ENCODE measurements at regions of chr1 and their contacts with region 1.

Region 1: GRCh38 chr1:202589190-202590030 is 120.8 kb downstream of the SYT2 start:
- DNase-seq: peak in 1 of 2 experiments; percentile 77
- H3K4me3 ChIP-seq: no peak overlapping the region
- H3K27ac ChIP-seq: no peak overlapping the region
- H3K4me1 ChIP-seq: no peaks in the 10 kb centered on the region
- H3K27me3 ChIP-seq: no peaks in the 10 kb centered on the region; a peak in 1 of 7 replicates
- CTCF ChIP-seq: no peak
- EP300 ChIP-seq: no peak
- POLR2A ChIP-seq: no peak
- RAD21 ChIP-seq: no peak

Region 2: GRCh38 chr1:202576816-202577215 is 12.6 kb before region 1 on chr1:
- CTCF ChIA-PET with region 1: interaction called, 18 read pairs
- POLR2A ChIA-PET with region 1: interaction called, 3 read pairs
- DNase-seq: no peak
- H3K4me3 ChIP-seq: no peak overlapping the region
- H3K27ac ChIP-seq: no peak overlapping the region
- H3K4me1 ChIP-seq: peaks cover 0 to 27% (median 19%) of the 10 kb centered on the region in 4 experiments; a peak in 6 of 7 replicates
- H3K27me3 ChIP-seq: no peaks in the 10 kb centered on the region
- CTCF ChIP-seq: no peak
- EP300 ChIP-seq: no peak
- POLR2A ChIP-seq: no peak
- RAD21 ChIP-seq: no peak

Region 3: DNA sequence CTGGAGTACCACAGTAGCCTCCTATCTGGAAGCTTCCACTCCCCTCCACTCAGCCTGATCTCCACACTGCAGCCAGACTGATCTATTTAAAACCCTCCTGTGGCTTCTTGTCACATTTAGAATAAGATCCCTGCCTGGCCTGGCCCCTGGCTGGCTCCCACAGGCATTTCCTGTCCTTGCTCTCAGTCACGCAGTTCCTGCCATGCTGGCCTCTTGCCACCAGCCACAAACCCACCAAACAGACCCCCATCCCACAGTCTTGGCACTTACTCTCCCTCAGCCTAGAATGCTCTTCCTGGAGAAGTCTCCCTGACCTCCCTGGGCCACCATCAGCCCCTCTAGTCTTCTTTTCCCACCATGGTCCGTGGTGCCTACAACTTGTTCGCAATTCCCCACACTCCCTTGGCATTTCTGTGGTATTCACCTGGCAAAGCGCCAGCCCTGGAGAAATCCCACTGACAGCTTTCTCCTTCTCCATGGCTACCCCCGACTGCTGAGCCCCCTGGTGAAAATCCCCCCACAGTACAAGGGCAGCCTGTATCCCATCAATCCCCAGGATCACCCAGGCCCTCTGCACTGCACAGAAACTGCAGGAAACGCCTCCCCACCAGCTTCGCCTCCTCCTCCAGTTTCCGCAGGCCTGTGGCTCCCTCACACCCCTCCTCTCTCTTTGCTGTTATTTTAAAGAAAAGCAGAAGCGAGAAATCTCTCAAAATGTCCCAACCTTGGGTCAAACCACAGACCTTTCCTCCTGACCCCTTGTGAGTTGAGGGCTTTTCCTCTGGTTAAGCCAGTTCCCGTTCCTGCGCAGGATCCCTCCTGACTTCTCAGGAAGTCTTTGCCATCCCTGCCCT is 26.3 kb after region 1 on chr1:
- CTCF ChIA-PET with region 1: no interaction called
- POLR2A ChIA-PET with region 1: no interaction called
- DNase-seq: no peak
- H3K4me3 ChIP-seq: no peak overlapping the region
- H3K27ac ChIP-seq: no peak overlapping the region
- H3K4me1 ChIP-seq: peaks cover 3 to 9% (median 7%) of the 10 kb centered on the region in 4 experiments; a peak in 5 of 7 replicates
- H3K27me3 ChIP-seq: no peaks in the 10 kb centered on the region
- CTCF ChIP-seq: no peak
- EP300 ChIP-seq: no peak
- POLR2A ChIP-seq: no peak
- RAD21 ChIP-seq: no peak

Measured in H1 (cell line).